AG04449 (cell line): ENCODE measurements at regions of chr2 and their contacts with region 1.

Region 1: DNA sequence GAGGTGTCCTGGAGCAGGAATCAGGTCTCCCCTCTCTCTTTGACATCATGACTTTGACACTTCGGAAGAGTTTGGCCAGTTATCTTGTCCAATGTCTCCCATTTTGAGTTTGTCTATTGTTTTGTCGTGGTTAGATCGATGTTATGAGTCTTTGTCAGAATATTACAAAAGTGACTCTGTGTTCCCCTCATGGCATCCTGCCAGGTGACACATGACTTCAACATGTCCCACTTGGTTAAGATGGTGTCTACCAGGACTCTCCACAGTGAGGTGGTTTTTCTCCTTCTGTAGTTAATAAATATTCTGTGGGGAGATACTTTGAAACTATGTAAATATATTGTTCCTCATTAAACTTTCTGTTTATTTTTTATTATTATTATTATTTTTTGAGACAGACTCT is 76.6 kb upstream of the BZW1 start:
- DNase-seq: no peak
- H3K4me3 ChIP-seq: no peak overlapping the region
- CTCF ChIP-seq: no peak

Region 2: DNA sequence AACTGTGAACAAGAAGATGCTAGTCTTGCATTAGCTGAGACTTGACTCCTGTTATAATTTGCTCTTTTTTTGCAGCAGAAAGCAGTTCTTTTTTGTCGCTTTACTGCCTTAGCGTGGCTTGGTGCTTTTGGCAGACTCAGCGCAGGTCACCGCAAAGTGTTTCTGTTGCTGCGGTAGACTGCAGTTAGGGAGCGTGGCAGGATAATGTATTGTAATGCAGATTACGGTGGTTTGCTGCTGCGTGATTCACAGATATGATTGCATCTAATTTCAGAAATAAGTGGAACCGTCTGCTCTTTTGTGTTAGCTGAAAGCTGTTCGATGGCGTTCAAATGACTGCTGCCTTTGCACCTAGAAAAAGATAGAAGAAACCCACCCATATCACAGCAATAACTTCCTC is 1145.8 kb before region 1 on chr2:
- CTCF ChIA-PET with region 1: no interaction called
- POLR2A ChIA-PET with region 1: no interaction called
- DNase-seq: no peak
- H3K4me3 ChIP-seq: no peak overlapping the region
- CTCF ChIP-seq: no peak

Region 3: GRCh38 chr2:200747668-200748618 is 12.9 kb after region 1 on chr2:
- CTCF ChIA-PET with region 1: interaction called, 22 read pairs
- POLR2A ChIA-PET with region 1: no interaction called
- DNase-seq: peak; percentile 92
- H3K4me3 ChIP-seq: peak overlapping the region; percentile 6; the same call in 1 of the 2 replicates
- CTCF ChIP-seq: no peak